ENCODE measurements at regions of chr1 and their contacts with region 1.

Region 1: GRCh38 chr1:206030714-206031113 is 7.0 kb upstream of the CTSE start:
- DNase-seq: peak; percentile 41 to 42
- ATAC-seq: peak in 7 of 8 donors; percentile 67 to 79 (median 76)
- H3K4me3 ChIP-seq: no peak overlapping the region
- H3K27ac ChIP-seq: no peak overlapping the region
- H3K4me1 ChIP-seq: peaks cover 0 to 7% (median 0%) of the 10 kb centered on the region in 9 donors
- H3K27me3 ChIP-seq: peaks cover 0 to 6% (median 0%) of the 10 kb centered on the region in 7 donors
- CTCF ChIP-seq: peak in 8 of 9 donors; percentile 49 to 87 (median 74)

Region 2: GRCh38 chr1:205983925-205984725 is 46.6 kb before region 1 on chr1:
- intact Hi-C with region 1: loop called in 2 of 10 experiments (anchors 5 kb)
- DNase-seq: peak; percentile 64 to 71
- ATAC-seq: peak; percentile 73 to 89 (median 86)
- H3K4me3 ChIP-seq: no peak overlapping the region
- H3K27ac ChIP-seq: no peak overlapping the region
- H3K4me1 ChIP-seq: peaks cover 0 to 48% (median 15%) of the 10 kb centered on the region in 9 donors
- H3K27me3 ChIP-seq: no peaks in the 10 kb centered on the region
- CTCF ChIP-seq: peak; percentile 44 to 85 (median 77)

Region 3: GRCh38 chr1:206012086-206012859 is 18.4 kb before region 1 on chr1:
- intact Hi-C with region 1: loop called in 1 of 10 experiments (anchors 1 kb)
- DNase-seq: peak; percentile 54 to 65
- ATAC-seq: peak; percentile 68 to 93 (median 83)
- H3K4me3 ChIP-seq: no peak overlapping the region
- H3K27ac ChIP-seq: peak overlapping the region in 1 of 10 donors; percentile 61
- H3K4me1 ChIP-seq: peaks cover 0 to 22% (median 0%) of the 10 kb centered on the region in 9 donors
- H3K27me3 ChIP-seq: no peaks in the 10 kb centered on the region
- CTCF ChIP-seq: no peak

Region 4: GRCh38 chr1:206081856-206082255 is 51.1 kb after region 1 on chr1:
- intact Hi-C with region 1: no loop called
- DNase-seq: no peak
- ATAC-seq: no peak
- H3K4me3 ChIP-seq: no peak overlapping the region
- H3K27ac ChIP-seq: no peak overlapping the region
- H3K4me1 ChIP-seq: peaks cover 0 to 8% (median 0%) of the 10 kb centered on the region in 9 donors
- H3K27me3 ChIP-seq: peaks cover 0 to 6% (median 0%) of the 10 kb centered on the region in 7 donors
- CTCF ChIP-seq: no peak